Activated CD8-positive, alpha-beta T cell treated with anti-CD3 and anti-CD28 coated beads, Interleukin-2, amount 10 ng/mL, durations not matched to agents 7 days and 5 days (primary cell): ENCODE measurements at regions of chr15 and their contacts with region 1.

Region 1: DNA sequence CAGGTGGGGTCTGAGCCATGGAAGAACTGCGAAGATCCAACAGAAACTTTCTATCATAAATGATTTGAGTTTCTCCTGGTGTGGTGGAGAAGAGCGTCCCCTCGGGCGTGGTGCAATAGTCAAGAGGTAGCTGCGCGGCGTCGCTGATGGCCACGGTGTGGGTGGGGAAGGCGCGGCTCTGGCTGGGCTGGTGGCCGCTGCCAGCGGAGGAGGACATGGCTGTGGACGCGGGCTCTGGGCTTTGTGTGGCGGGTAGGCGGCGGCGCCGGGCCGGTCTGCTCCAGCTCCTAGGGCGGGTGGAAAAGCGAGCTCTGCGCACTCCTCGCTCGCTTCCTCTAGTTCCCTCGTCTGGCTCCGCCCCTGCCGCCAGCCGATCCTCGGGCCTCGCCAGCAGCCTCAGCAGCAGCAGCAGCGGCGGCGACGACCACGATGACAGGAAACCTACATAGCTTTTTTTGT is 5.9 kb downstream of the STARD9 start:
- DNase-seq: peak; percentile 89
- ATAC-seq: peak; percentile 100
- H3K4me3 Mint-ChIP-seq: peak overlapping the region; percentile 70
- H3K27ac Mint-ChIP-seq: peak overlapping the region; percentile 74
- H3K4me1 Mint-ChIP-seq: peaks cover 54% of the 10 kb centered on the region
- H3K27me3 Mint-ChIP-seq: peaks cover 13% of the 10 kb centered on the region

Region 2: DNA sequence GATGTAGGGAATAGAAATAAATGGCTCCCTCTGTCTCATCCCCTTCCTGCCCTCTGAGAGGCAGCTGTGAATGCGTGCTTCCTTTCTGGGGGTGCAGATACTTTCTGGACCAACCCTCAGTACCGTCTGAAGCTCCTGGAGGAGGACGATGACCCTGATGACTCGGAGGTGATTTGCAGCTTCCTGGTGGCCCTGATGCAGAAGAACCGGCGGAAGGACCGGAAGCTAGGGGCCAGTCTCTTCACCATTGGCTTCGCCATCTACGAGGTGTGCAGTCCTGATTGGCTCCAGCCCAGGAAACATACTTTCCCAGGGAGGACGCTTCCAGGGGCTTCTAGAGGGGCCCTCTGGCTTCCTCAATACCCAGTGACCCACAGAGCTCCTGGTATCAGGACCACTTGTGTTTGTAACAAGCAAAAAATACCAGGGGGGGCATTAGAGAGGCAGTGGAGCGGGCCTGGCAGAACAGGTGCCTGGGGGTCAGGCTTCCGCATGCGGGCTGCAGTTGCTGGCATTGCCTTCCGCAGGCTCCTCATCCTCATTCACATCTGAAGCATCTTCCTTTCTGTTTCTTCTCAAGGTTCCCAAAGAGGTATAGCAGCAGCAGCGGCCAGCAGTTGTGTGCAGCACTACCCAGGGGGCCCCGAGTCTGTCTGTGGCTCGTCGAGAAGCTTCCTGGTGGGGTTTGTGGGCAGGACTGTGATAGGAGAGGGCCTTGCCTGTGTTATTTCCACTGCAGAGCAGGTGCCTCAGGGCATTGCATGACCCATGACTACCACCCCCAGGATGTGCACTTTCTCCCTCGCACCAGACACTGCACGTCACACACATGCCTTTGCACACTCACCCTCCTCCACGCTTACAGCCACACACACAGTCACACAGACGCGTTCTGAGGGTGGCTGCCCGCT is 179.5 kb before region 1 on chr15:
- CTCF ChIA-PET with region 1: no interaction called
- POLR2A ChIA-PET with region 1: no interaction called
- DNase-seq: peak; percentile 50
- ATAC-seq: peak; percentile 80
- H3K4me3 Mint-ChIP-seq: peak overlapping the region; percentile 44
- H3K27ac Mint-ChIP-seq: peak overlapping the region; percentile 80
- H3K4me1 Mint-ChIP-seq: peaks cover 31% of the 10 kb centered on the region
- H3K27me3 Mint-ChIP-seq: no peaks in the 10 kb centered on the region

Region 3: GRCh38 chr15:42591238-42591934 is 10.1 kb after region 1 on chr15:
- CTCF ChIA-PET with region 1: interaction called, 26 read pairs
- POLR2A ChIA-PET with region 1: interaction called, 4 read pairs
- DNase-seq: no peak
- ATAC-seq: no peak
- H3K4me3 Mint-ChIP-seq: no peak overlapping the region
- H3K27ac Mint-ChIP-seq: no peak overlapping the region
- H3K4me1 Mint-ChIP-seq: no peaks in the 10 kb centered on the region
- H3K27me3 Mint-ChIP-seq: no peaks in the 10 kb centered on the region